ENCODE measurements at regions of chr1 and their contacts with region 1.

Region 1: DNA sequence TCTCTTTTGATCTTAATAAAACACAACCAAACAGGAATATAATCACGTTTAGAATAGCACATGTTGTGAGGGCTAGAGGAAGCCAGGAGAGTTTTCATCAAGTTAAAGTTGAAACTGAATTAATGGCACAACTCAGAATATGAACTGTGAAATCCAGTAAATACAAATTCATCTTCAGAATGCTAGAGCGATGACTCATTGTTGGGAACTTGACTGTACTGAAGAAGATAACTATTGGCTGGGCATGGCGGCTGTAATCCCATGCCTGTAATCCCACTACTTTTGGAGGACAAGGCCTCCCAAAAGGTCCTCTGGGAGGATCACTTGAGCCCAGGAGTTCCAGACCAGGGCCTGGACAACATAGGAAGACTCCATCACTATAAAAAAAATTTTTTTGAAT is 8.8 kb downstream of the SYF2 start:
- DNase-seq: no peak
- ATAC-seq: no peak
- H3K4me3 ChIP-seq: no peak overlapping the region
- H3K27ac ChIP-seq: no peak overlapping the region
- H3K4me1 ChIP-seq: no peaks in the 10 kb centered on the region
- H3K27me3 ChIP-seq: no peaks in the 10 kb centered on the region
- CTCF ChIP-seq: no peak
- POLR2A ChIP-seq: no peak

Region 2: GRCh38 chr1:24659993-24660665 is 563.3 kb before region 1 on chr1:
- in situ Hi-C with region 1: loop called in 2 of 4 experiments (anchors 10 to 25 kb)
- intact Hi-C with region 1: no loop called
- DNase-seq: no peak
- ATAC-seq: no peak
- H3K4me3 ChIP-seq: no peak overlapping the region
- H3K27ac ChIP-seq: peak overlapping the region in 3 of 4 donors; percentile 19 to 35 (median 28)
- H3K4me1 ChIP-seq: peaks cover 0 to 4% of the 10 kb centered on the region in 2 donors
- H3K27me3 ChIP-seq: no peaks in the 10 kb centered on the region
- CTCF ChIP-seq: no peak
- POLR2A ChIP-seq: no peak

Measured in gastrocnemius medialis (tissue), 4 donors.